Left lung (tissue), 14 donors: ENCODE measurements at regions of chr5 and their contacts with region 1.

Region 1: DNA sequence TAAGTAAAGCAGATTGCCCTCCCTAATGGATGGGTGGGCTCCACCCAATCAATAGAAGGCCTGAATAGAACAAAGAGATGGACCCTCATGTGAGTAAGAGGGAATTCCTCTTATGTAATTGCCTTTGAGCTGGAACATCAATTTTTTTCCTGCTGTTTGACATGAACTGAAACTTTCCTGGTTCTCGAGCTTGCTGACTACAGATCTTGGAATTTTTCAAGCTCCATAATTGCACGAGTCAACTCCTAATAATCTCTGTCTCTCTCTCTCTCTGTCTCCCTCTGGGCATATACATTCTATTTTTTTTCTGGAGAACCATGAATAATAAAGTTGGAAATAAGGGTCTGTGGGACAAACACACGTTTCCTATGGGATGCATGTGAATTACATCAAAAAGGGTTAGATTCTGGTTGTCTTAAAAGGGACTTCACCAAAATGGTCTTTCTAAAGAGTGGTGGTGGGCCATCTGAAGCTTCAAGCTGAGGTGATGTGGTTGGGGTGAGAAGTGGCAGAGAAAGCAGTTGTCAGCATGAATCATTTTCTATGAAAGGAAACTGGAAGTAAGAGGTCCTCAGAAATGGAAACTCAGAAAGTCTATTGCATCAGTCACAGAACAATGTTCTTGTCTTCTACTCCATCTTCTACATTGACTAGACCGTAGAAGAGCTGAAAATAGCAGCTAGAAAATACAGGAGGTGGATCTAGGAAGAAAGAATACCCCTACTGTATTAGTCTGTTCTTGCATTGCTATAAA is 47.0 kb upstream of the HOMER1 start:
- DNase-seq: no peak
- ATAC-seq: no peak
- H3K4me3 ChIP-seq: no peak overlapping the region
- H3K27ac ChIP-seq: no peak overlapping the region
- H3K4me1 ChIP-seq: no peaks in the 10 kb centered on the region
- H3K27me3 ChIP-seq: no peaks in the 10 kb centered on the region
- CTCF ChIP-seq: no peak

Region 2: DNA sequence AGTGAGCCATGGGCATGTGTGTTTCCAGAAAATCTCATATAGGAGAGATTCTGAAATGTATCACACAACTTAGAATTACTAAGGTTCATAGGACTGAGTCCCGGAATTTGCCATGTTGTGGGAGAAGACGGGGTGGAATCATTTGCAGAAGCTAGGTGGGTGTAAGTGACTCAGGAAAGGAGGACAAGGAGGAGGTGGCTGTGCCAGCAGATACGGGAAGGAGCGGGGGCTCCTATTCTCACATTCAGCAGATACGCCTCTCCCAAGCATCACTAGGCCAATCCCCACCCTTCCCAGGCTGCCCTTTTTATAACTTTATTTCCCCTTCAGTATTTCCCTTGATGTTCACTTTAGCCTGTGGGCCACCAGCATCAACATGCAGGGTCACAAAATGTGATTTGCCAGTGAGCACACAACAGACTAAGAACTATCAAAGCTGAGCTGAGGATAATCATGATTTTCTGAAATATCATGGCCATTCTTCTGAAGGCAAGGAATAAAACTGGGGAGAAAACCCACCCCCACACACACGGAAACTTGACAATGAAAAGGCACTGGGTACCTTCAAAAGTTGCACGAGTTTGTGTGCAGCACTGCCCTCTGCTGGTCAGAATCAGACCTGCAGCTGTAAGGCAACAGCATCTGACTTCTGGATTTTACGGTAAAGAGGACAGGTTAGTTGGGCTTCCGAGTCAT is 296.9 kb after region 1 on chr5:
- intact Hi-C with region 1: loop called in 1 of 2 experiments (anchors 5 kb)
- DNase-seq: peak in 3 of 4 donors; percentile 53 to 70 (median 54)
- ATAC-seq: peak; percentile 92
- H3K4me3 ChIP-seq: no peak overlapping the region
- H3K27ac ChIP-seq: no peak overlapping the region
- H3K4me1 ChIP-seq: no peaks in the 10 kb centered on the region
- H3K27me3 ChIP-seq: peaks cover 0 to 8% of the 10 kb centered on the region in 2 donors
- CTCF ChIP-seq: peak; percentile 88 to 92